GM12878 (cell line): ENCODE measurements at regions of chr16 and their contacts with region 1.

Region 1: DNA sequence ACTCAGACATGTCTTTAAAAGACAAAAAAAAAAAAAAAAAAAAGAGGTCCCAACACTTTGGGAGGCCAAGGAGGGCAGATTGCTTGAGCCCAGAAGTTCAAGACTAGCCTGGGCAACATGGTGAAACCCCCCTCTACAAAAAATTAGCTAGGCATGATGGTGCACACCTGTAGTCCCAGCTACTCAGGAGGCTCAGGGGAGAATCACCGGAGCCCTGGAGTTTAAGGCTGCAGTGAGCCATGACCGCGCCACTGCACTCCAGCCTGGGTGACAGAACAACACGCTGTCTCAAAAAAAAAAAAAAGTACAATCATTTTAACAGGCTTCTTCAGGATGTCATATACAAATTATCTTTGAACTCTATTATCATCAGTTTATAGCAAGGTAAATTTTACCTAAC is 22.0 kb downstream of the C16orf87 start:
- DNase-seq: no peak
- ATAC-seq: peak; percentile 76
- H3K4me3 ChIP-seq: 0 out of 2 replicates have a peak overlapping the region, but pooled peaks have one; percentile 33
- H3K27ac ChIP-seq: no peak overlapping the region
- H3K4me1 ChIP-seq: peaks cover 22% of the 10 kb centered on the region
- H3K27me3 ChIP-seq: no peaks in the 10 kb centered on the region
- CTCF ChIP-seq: no peak
- EP300 ChIP-seq: no peak
- POLR2A ChIP-seq: no peak
- RAD21 ChIP-seq: no peak

Region 2: DNA sequence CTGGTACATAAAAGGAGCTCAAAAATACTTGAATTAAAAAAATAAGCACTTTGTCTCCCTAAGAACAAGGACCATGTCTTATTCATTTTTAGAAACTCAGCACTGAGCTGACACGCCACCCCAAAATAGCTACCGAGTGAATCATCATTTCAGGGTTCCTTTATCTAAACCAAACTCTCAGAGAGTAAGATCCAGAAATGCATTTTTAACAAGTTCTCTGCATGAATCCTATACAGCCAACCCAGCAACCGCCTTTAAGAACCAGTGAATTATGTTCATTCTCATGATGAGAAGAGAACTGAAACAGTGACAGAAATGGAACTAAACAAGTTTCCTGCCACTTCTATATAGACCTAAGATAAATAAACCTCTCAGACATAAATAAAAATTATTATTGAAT is 13.3 kb after region 1 on chr16:
- CTCF ChIA-PET with region 1: interaction called, 8 read pairs
- POLR2A ChIA-PET with region 1: interaction called, 11 read pairs
- RAD21 ChIA-PET with region 1: interaction called, 9 read pairs
- SMC1A ChIA-PET with region 1: interaction called, 25 read pairs
- in situ Hi-C with region 1: no loop called
- intact Hi-C with region 1: no loop called
- DNase-seq: peak; percentile 57
- ATAC-seq: peak; percentile 79
- H3K4me3 ChIP-seq: peak overlapping the region; percentile 54; the same call in 1 of the 2 replicates
- H3K27ac ChIP-seq: peak overlapping the region; percentile 88
- H3K4me1 ChIP-seq: peaks cover 26% of the 10 kb centered on the region
- H3K27me3 ChIP-seq: no peaks in the 10 kb centered on the region
- CTCF ChIP-seq: no peak
- EP300 ChIP-seq: peak in 1 of 2 experiments; percentile 69; a peak in 2 of 4 replicates
- POLR2A ChIP-seq: no peak
- RAD21 ChIP-seq: 0 out of 2 replicates have a peak, but pooled peaks have one; percentile 3

Region 3: GRCh38 chr16:46830902-46831647 is 22.1 kb after region 1 on chr16 and contains the start of gene C16orf87:
- CTCF ChIA-PET with region 1: interaction called, 6 read pairs
- POLR2A ChIA-PET with region 1: interaction called, 11 read pairs
- RAD21 ChIA-PET with region 1: interaction called, 6 read pairs
- SMC1A ChIA-PET with region 1: interaction called, 8 read pairs
- in situ Hi-C with region 1: no loop called
- intact Hi-C with region 1: no loop called
- DNase-seq: peak; percentile 63
- ATAC-seq: peak; percentile 93
- H3K4me3 ChIP-seq: peak within 1 kb of the TSS; percentile 81
- H3K27ac ChIP-seq: peak within 1 kb of the TSS; percentile 72
- H3K4me1 ChIP-seq: peaks cover 6% of the 10 kb centered on the region; the same call in 1 of the 2 replicates
- H3K27me3 ChIP-seq: no peaks in the 10 kb centered on the region
- CTCF ChIP-seq: no peak
- EP300 ChIP-seq: 0 out of 4 replicates have a peak, but pooled peaks of 1 of the 2 experiments have one; percentile 16
- POLR2A ChIP-seq: peak; percentile 81
- RAD21 ChIP-seq: no peak
- polyA plus RNA-seq, gene C16orf87: 49.0 to 51.8 TPM

Region 4: DNA sequence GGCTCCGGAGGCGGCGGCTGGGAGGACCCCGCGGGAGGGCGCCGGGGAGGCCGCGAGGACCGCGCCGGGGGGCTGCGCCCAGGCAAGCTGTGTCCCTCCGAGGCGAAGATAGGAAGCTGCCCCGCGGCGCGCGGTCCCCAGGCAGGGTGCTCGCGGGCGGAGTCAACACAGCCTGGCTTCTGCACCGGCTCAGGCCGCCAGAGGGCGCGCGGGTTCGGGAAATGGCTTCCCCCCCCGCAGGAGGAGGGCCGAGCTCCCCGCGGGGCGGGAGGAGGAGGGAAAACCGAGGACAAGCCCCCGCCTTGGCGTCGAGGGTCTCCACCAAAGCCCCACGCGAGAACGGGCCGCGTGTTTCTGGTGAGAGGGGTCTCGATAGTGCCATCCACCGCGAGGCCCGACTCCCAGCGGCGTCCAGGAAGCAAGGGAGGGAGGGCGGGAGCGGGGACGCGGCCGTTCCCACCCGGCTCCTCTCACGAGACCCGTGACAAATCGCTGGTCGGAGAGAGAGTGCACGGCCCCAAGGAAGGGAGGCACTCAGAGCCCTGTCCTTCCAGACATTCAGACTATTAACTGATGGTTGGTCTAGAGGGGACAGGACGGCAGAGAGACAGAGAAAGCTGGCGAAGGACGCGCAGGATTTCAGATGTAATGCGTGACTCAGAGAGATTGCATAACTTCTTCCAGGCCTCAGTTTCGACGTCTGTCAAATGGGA is 228.9 kb after region 1 on chr16:
- CTCF ChIA-PET with region 1: no interaction called
- POLR2A ChIA-PET with region 1: no interaction called
- RAD21 ChIA-PET with region 1: no interaction called
- SMC1A ChIA-PET with region 1: no interaction called
- in situ Hi-C with region 1: no loop called
- intact Hi-C with region 1: no loop called
- DNase-seq: peak; percentile 40
- ATAC-seq: peak; percentile 97
- H3K4me3 ChIP-seq: peak overlapping the region; percentile 75
- H3K27ac ChIP-seq: no peak overlapping the region
- H3K4me1 ChIP-seq: peaks cover 16% of the 10 kb centered on the region
- H3K27me3 ChIP-seq: no peaks in the 10 kb centered on the region
- CTCF ChIP-seq: peak; percentile 87 to 98 (median 95)
- EP300 ChIP-seq: 0 out of 4 replicates have a peak, but pooled peaks of 1 of the 2 experiments have one; percentile 21
- POLR2A ChIP-seq: peak; percentile 73
- RAD21 ChIP-seq: peak; percentile 90